Esophagus squamous epithelium (tissue), 5 donors: ENCODE measurements at regions of chr2 and their contacts with region 1.

Region 1: GRCh38 chr2:46364797-46365457 is 67.7 kb downstream of the EPAS1 start:
- DNase-seq: no peak
- H3K4me3 ChIP-seq: no peak overlapping the region
- H3K27ac ChIP-seq: peak overlapping the region in 1 of 4 donors; percentile 11
- H3K4me1 ChIP-seq: peaks cover 0 to 40% (median 0%) of the 10 kb centered on the region in 3 donors
- H3K27me3 ChIP-seq: no peaks in the 10 kb centered on the region
- CTCF ChIP-seq: peak; percentile 65 to 88 (median 83)
- POLR2A ChIP-seq: no peak

Region 2: DNA sequence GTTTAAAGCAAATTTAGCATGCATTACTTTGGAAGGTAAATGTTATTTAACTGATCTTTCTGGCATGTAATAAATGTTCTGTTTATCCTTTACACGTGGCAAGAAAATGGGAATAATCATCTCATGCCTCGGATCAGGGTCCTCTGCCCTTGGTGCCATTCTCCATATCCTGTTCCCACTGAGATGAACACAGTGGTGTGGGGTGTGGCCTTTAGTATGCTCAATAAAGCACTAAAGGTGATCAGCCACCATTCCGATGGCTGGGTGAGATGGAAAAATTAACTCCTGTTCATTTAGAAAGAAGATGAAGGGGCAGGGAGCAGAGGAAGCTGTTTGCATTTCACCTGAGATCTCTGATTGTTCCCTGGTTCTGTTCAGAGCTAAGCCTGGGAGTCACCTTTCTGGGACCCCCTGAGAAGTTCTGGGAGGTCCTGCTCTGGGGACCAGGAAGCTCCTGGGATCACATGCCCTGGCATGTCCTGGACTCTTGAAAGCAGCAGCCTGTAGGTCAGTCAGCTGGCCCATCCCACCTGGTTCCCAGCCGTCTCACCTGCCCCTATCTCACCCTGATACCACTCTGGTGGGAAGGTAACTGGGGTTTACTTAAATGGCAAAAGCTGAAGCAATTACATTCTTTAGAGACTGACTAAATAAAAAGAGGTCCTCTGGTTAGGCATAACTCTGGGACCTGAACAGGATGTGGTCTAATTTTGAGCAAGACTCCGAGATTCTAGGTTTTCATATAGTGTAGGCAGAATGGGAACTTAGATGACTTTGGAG is 356.6 kb before region 1 on chr2:
- intact Hi-C with region 1: loop called (anchors 5 kb)
- DNase-seq: no peak
- H3K4me3 ChIP-seq: no peak overlapping the region
- H3K27ac ChIP-seq: no peak overlapping the region
- H3K4me1 ChIP-seq: peaks cover 0 to 12% (median 0%) of the 10 kb centered on the region in 3 donors
- H3K27me3 ChIP-seq: no peaks in the 10 kb centered on the region
- CTCF ChIP-seq: no peak
- POLR2A ChIP-seq: no peak

Region 3: DNA sequence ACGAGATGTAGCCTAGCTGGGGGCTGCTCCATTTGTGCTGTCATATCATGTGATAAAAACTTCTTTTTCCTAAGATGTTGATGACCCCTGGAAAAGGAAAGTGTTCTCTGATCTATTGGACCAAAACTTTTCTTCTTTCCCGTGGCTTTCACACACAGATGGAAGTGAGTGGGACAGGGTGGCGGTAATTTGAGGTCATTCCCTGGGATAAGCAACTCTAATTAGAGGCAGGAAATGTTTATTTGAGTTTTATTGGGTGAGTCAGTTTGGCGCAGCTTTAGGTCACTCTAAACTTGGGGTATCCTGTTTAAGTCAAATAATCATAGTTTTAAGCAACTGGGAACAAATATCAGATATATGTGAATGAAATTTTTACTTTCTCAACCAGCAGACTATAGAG is 288.7 kb before region 1 on chr2:
- intact Hi-C with region 1: loop called (anchors 5 kb)
- DNase-seq: no peak
- H3K4me3 ChIP-seq: no peak overlapping the region
- H3K27ac ChIP-seq: peak overlapping the region in 3 of 4 donors; percentile 12 to 55 (median 52)
- H3K4me1 ChIP-seq: peaks cover 0 to 44% (median 0%) of the 10 kb centered on the region in 3 donors
- H3K27me3 ChIP-seq: no peaks in the 10 kb centered on the region
- CTCF ChIP-seq: no peak
- POLR2A ChIP-seq: no peak

Region 4: GRCh38 chr2:46296840-46297545 is 67.9 kb before region 1 on chr2 and contains the start of gene EPAS1:
- intact Hi-C with region 1: loop called (anchors 10 kb)
- DNase-seq: peak; percentile 50
- H3K4me3 ChIP-seq: peak within 1 kb of the TSS; percentile 79 to 85 (median 81)
- H3K27ac ChIP-seq: peak within 1 kb of the TSS; percentile 93 to 98 (median 94)
- H3K4me1 ChIP-seq: peaks cover 4 to 43% (median 23%) of the 10 kb centered on the region in 3 donors
- H3K27me3 ChIP-seq: no peaks in the 10 kb centered on the region
- CTCF ChIP-seq: peak in 1 of 6 experiments; percentile 0
- POLR2A ChIP-seq: peak in 2 of 4 donors; percentile 86 to 88
- total RNA-seq, gene EPAS1: 86.7 to 151 (median 105) TPM

Region 5: DNA sequence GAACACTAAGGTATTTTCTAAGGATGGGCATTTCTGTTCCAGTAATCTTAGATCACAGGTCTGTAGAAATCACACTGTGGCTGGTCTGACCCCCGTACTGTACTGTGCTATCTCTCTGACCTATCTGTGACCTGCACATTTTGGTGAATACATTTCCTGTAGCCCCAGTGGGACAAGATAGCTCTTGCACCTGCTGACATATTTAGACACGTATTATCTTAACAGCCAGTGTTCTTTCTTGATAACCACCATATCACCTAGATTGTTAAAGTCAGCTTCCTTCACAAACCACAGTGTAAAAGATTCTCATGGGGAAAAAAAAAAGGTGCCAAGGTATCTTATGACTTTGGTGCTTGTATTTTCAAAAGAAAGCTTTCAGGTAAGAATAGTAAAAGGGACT is 74.7 kb after region 1 on chr2:
- intact Hi-C with region 1: no loop called
- DNase-seq: no peak
- H3K4me3 ChIP-seq: no peak overlapping the region
- H3K27ac ChIP-seq: no peak overlapping the region
- H3K4me1 ChIP-seq: peaks cover 0 to 14% (median 4%) of the 10 kb centered on the region in 3 donors
- H3K27me3 ChIP-seq: no peaks in the 10 kb centered on the region
- CTCF ChIP-seq: no peak
- POLR2A ChIP-seq: no peak